Cardiac septum (tissue), 1 donor: ENCODE measurements at regions of chr18 and their contacts with region 1.

Region 1: DNA sequence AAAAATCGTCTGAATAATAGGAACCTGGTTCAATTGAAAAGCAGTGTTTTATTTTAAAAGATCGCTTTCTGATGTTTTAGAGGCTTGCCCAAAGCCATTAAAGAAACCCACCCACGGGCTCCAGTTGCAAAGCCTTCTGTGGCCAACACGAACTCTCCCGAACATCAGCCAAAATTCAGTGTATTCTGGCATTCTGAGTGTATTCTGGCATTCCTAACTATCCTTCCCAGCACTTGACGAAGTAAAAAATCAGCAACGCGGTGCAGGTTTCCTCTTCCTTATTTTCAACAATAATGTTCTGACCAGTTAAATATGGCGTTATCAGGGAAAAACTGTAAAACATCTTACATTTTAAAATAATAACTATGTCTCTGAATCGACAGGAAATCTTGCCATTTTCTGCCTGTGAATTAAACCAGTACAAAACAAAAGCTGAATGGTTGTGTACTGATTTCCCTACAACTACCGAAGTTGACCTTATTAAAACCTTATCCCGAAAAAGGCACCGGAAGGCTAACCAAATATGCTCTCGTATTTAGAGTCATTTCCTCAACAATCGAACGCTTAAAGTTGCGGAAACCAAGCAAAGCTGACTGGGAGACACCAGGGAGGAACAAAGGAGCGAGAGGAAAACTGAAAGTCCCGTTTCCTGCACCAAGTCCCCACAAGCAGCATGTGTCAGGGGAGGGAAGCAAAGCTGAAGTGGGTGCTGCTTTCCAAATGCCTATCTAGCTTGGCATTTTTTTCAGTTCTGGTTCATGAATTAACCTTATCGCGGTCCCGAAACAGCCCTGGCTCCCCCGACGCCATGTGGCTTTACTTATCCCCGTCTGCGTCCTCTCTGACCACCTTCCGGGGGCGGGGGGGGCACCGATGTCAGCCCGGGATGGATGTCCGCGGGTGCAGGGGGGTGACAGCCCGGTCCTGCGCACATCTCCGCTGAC is 44.3 kb downstream of the ZNF516 start:
- DNase-seq: no peak

Region 2: GRCh38 chr18:76416911-76417310 is 33.8 kb before region 1 on chr18:
- intact Hi-C with region 1: loop called (anchors 5 kb)
- DNase-seq: no peak

Region 3: DNA sequence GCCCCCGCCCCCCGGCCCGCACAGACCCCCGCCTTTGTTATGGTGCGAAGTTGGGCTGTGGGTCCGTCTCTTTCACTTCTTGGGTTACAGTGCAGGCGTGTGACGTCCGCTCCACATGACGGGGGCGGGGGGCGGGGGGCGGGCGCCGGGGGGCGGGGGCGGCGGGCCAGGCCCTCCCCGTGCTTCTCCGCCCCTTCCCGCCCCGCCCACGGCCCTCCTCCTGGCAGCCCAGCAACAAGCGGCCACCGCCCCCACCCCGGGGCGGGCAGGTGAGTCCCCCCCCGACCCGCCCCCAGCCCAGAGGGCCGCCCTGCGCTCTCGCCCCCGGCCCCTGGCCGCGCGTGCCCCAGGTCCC is 40.7 kb after region 1 on chr18:
- intact Hi-C with region 1: loop called (anchors 2 kb)
- DNase-seq: peak; percentile 92